ENCODE measurements at regions of chr16 and their contacts with region 1.

Region 1: DNA sequence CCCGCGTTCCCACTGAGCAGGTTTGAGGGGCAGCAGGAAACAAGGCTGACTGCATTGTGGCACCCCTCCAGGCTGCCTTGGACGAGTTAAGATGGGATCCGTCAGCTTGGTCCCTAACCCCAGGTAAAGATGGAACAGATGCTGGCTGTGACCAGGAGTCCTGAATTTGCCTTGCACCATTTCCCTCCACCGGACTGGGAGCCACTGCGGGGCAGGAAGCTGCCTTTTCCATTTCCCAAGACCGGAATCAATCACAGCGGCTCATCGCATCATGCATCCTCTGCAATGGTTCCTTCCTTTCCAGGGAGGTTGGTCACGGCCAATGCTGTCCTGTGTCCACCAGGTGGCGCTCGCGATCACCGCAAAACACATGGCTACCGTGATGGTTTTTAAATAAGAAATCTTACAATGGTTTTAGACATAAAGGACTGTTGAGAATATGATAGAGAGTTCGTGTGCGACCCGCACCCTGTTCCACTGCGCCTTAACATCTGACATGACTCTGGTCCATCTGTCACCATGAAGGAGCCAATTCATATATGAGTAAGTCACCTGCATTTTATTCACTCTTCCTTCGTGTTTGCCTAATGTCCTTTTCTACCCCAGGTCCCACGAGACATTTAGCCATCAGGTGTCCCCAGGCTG is 6.8 kb upstream of the MEAK7 start:
- DNase-seq: peak; percentile 89
- ATAC-seq: peak; percentile 80

Region 2: DNA sequence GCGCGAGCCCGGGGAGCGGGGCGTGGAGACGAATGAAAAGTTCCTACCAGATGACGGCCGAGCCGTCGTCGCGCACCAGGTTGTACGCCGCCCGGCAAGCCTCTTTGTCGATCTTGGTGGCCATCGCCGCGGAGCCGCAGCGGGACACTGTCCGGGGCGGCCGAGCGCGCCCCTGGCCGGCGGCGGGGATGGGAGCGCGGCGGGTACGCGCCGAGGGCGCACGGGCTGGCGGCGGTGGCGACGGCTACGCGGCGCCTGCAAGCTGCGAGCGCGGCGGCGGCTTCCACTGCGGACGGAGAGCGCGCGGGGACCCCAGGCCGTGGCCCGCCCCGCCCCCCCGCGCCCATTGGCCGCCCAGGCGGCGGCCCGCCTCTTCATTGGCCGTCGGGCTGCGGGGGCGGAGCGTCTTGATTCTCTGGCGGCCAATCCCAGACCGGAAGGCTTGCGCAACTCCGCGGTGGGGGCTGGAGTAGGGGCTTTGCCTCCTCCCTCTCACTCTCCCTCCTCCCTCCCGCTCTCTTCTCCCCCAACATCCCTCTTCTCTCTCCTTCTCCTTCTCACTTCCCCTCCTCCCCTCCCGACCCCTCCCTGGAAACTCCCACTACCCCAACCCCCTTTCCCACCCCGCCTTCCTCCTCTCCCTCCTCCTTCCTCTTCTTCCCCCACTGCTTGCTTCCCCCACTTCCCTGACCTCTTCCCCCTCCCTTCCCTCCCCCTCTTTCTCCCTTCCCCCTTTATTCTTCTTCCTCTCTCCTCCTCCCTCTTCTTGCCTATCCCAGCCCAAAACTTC is 106.7 kb after region 1 on chr16 and contains the start of gene COTL1:
- intact Hi-C with region 1: loop called (anchors 5 kb)
- DNase-seq: peak; percentile 99
- ATAC-seq: peak; percentile 94
- total RNA-seq, gene COTL1: 11.8 TPM